Aorta (tissue), 5 donors: ENCODE measurements at regions of chr11 and their contacts with region 1.

Region 1: GRCh38 chr11:72112321-72113219 is at the start of gene ANAPC15:
- DNase-seq: peak; percentile 98 to 99
- ATAC-seq: peak; percentile 97
- H3K4me3 ChIP-seq: peak within 1 kb of the TSS; percentile 21 to 71
- H3K27ac ChIP-seq: peak within 1 kb of the TSS; percentile 87 to 99
- H3K4me1 ChIP-seq: no peaks in the 10 kb centered on the region
- H3K27me3 ChIP-seq: no peaks in the 10 kb centered on the region
- total RNA-seq, gene ANAPC15: 24.6 to 24.7 TPM

Region 2: DNA sequence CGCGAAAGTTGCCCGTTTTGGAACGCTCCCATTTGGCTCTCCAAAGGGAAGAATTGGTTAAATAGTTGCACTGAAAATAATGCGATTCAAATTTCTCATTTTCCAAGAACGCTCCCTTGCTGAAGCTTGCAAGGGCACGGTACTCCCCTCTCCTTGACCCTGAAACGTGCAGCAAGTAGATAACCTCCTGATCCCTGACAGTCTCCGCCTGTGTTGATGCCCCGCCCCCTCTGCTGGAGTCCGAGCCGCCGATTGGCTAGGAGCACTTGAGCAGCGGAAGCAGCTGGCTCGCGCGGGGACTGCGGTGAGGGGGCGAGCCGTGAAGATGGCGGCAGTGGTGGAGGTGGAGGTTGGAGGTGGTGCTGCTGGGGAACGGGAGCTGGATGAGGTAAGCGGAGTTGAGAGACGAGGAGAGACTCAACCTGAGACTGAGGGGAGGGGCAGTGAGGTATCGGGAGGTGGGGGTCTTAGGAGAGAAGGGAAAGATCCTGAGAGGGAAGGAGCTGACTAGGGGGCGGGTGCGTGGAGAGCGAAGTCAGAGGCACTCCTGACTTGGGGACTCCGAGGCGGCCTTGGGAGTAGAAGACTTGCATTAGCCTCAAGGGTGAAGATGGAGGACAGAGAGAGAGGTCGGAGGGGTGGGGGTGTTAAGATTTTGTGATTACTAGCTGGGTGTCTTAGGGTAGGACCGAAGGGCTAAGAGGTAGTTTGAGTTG is 183.7 kb before region 1 on chr11 and contains the start of gene RNF121:
- intact Hi-C with region 1: loop called in 1 of 2 experiments (anchors 2 kb)
- DNase-seq: peak; percentile 99
- ATAC-seq: peak; percentile 99
- H3K4me3 ChIP-seq: peak within 1 kb of the TSS; percentile 70 to 88
- H3K27ac ChIP-seq: peak within 1 kb of the TSS in 1 of 2 donors; percentile 14
- H3K4me1 ChIP-seq: peaks cover 1 to 7% of the 10 kb centered on the region in 2 donors
- H3K27me3 ChIP-seq: no peaks in the 10 kb centered on the region
- total RNA-seq, gene RNF121: 38.3 to 38.6 TPM

Region 3: GRCh38 chr11:72238040-72238450 is 125.5 kb after region 1 on chr11:
- intact Hi-C with region 1: loop called in 1 of 2 experiments (anchors 10 kb)
- DNase-seq: peak in 1 of 2 donors; percentile 84
- ATAC-seq: peak; percentile 44
- H3K4me3 ChIP-seq: no peak overlapping the region
- H3K27ac ChIP-seq: no peak overlapping the region
- H3K4me1 ChIP-seq: no peaks in the 10 kb centered on the region
- H3K27me3 ChIP-seq: peaks cover 0 to 3% of the 10 kb centered on the region in 2 donors

Region 4: GRCh38 chr11:72274435-72274834 is 161.9 kb after region 1 on chr11:
- intact Hi-C with region 1: no loop called
- DNase-seq: no peak
- ATAC-seq: no peak
- H3K4me3 ChIP-seq: no peak overlapping the region
- H3K27ac ChIP-seq: no peak overlapping the region
- H3K4me1 ChIP-seq: no peaks in the 10 kb centered on the region
- H3K27me3 ChIP-seq: no peaks in the 10 kb centered on the region

Region 5: GRCh38 chr11:72793425-72794367 is 681.1 kb after region 1 on chr11 and contains the start of gene STARD10:
- intact Hi-C with region 1: no loop called
- DNase-seq: peak; percentile 97 to 99
- ATAC-seq: peak; percentile 99
- H3K4me3 ChIP-seq: peak within 1 kb of the TSS; percentile 23 to 47
- H3K27ac ChIP-seq: peak within 1 kb of the TSS; percentile 29 to 85
- H3K4me1 ChIP-seq: peaks cover 0 to 3% of the 10 kb centered on the region in 2 donors
- H3K27me3 ChIP-seq: no peaks in the 10 kb centered on the region
- total RNA-seq, gene STARD10: 17.7 to 30.7 TPM